H1 (cell line): ENCODE measurements at regions of chr7 and their contacts with region 1.

Region 1: DNA sequence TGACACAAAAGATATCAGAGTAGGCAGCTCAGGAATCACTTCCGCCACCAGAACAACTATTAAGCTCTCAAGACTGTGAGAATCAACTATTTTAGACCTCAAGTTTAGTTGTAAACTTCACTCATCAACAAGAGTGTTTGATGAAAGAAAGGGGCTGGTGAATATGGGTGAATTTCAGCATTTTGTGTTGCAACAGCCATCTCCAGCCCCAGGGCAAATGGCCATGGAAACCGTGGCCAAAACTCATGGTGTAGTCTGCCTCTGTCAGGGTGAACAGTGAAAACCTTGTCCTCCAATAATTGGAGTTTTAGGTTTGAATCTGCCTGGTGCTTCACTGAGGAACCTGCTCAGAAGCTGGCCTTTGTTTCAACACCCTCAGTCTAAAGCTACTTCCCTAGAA is 60.0 kb downstream of the POLR1F start:
- DNase-seq: no peak
- H3K4me3 ChIP-seq: no peak overlapping the region
- H3K27ac ChIP-seq: no peak overlapping the region
- H3K4me1 ChIP-seq: no peaks in the 10 kb centered on the region; a peak in 1 of 7 replicates
- H3K27me3 ChIP-seq: no peaks in the 10 kb centered on the region
- CTCF ChIP-seq: no peak
- EP300 ChIP-seq: no peak
- POLR2A ChIP-seq: no peak
- RAD21 ChIP-seq: no peak

Region 2: DNA sequence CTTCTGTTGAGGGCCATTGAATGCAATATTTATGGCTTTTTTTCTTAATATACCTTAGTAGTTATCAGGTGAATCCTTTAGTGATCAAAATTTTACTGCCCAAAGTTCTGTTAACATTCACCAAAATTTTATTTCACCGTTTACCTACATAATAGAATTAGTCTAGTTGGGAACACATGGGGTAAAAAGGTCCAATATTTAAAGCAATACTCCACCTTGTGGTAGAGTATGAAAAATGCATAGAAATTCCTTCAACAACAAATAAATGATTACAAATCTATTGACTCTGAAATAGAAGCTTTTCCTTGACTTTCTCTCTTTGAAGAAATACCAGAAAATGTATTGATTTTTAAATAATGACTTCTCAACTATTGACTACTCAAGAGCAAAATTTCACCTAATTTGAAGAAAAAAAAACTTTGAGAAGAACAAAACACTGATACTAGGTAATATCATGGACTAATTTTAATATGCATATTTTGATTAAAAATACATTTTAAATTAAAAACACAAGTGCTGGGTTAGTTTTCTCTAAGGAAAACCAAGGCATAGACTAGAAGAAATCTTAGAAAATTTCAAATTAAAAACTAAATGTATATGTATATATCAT is 16.7 kb after region 1 on chr7:
- CTCF ChIA-PET with region 1: interaction called, 13 read pairs
- POLR2A ChIA-PET with region 1: no interaction called
- DNase-seq: no peak
- H3K4me3 ChIP-seq: no peak overlapping the region
- H3K27ac ChIP-seq: no peak overlapping the region
- H3K4me1 ChIP-seq: no peaks in the 10 kb centered on the region
- H3K27me3 ChIP-seq: no peaks in the 10 kb centered on the region
- CTCF ChIP-seq: peak in 2 of 3 experiments; percentile 12 to 37; a peak in 2 of 4 replicates
- EP300 ChIP-seq: no peak
- POLR2A ChIP-seq: no peak
- RAD21 ChIP-seq: peak in 1 of 2 experiments; percentile 65; a peak in 3 of 4 replicates